ENCODE measurements at regions of chr21 and their contacts with region 1.

Region 1: DNA sequence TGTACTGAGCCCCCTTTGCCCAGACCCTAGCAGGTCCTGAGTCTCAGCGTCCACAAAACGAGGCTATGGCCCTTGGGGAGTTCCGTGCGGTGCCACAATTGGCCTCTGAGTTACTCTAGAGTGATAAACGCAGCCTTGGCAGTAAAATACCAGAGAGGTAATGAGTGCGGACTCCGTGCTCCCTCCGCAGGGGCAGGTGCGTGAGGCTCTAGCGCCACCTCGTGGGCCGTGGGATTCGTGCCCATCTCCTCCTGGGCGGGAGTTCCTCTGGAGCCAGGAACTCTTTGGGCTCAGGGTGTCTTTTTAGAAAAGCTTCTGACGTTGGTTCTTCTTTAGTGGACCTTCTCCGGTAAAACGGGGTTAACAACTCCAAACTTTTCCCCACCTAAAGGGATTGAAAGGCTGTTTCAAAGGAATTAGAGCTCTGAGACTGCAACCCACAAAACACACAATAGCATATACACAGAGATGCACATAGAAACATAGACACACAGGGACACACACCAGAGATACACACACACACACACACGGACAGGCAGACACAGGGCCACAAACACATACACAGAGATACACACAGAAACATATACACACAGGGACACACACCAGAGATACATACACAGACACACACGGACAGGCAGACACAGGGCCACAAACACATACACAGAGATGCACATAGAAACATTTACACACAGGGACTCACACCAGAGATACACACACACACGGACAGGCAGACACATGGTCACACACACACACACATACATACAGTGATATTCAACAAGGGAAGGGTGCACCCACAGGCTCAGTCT is 99.4 kb downstream of the KCNJ15 start:
- DNase-seq: peak; percentile 95

Region 2: GRCh38 chr21:37711836-37712568 is 644.2 kb before region 1 on chr21:
- intact Hi-C with region 1: loop called in 1 of 2 experiments (anchors 10 kb)
- DNase-seq: peak; percentile 92

Region 3: DNA sequence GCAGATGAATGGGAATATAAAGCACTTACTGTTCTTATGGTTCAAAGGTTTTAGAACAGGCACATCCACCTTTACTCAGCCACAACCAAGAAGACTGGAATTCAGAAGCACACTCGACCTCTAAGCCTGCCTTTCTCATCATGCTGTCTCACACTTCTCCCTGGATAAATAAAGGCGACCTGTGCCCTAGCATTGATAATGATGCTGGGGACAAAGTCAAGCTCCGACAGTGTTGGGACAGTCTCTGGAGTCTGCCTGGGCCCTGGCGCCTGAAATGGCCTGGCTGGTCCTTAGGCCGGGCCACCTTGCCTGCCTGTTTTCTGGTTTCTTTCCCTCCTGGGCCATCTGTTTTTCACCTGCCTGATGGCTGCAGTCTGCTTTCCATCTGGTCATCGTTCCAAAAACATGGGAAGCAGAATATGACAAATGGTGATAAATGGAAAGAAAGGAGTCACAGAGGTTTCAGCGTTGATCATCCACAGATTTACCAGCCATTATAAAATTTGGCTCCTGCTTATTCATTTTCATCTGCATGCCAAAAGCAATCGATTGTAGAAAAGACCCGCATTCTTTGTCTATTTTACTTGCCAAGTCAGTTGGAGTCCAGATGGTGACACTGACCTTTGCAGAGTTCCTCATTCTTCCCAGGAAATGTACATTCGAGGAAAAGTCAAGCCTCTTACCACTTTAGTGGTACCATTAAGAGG is 190.6 kb before region 1 on chr21:
- intact Hi-C with region 1: loop called in 1 of 2 experiments (anchors 10 kb)
- DNase-seq: no peak

Region 4: DNA sequence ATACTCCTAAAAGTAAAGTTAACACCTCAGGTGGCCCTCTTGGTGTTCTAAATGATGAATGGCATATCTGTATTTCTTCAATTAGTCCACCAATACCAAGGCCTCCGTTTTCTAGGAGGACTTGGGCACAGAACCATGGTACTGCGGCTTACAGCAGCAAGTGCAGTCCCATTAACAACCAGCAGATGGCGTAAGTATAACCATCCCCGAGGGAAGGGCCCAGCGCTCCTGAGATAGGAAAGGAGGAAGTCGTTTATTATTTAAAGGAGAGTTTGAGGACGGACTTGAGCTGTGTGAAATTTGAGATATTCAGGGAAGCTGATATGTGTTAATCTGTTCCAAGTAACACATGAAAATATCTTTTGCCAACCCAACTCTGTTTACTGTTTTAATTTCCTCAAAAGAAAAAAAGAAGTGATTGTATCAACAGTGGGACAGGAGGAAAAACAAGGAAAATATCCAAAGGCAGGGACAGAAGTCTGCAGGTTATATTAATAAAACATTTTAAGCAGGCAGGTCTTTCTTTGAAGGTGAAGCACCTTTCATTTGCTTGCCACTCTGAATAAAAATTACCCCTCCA is 137.1 kb before region 1 on chr21:
- intact Hi-C with region 1: loop called (anchors 5 kb)
- DNase-seq: no peak

Region 5: GRCh38 chr21:38751379-38752050 is 395.3 kb after region 1 on chr21:
- intact Hi-C with region 1: no loop called
- DNase-seq: peak; percentile 94